Left colon (tissue), 2 donors: ENCODE measurements at regions of chr11 and their contacts with region 1.

Region 1: DNA sequence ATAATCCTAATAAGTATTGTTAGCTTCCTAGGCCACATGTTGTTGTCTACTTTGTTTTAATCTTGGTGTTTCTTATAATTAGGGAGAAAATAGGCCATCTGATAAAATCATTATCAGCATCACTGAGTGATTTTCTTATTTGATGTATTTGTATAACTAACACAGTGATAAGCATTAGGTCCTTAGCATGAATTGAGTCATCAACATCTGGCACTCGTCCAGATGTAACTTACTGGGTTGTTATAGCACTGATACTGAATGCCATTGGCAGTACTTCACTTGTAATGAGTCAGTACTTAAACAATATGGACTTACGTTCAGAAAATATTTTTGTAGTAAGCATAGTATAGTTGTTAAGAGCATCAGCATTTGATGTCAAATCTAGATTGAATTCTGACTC is 16.2 kb downstream of the API5 start:
- DNase-seq: no peak
- ATAC-seq: peak; percentile 65

Region 2: DNA sequence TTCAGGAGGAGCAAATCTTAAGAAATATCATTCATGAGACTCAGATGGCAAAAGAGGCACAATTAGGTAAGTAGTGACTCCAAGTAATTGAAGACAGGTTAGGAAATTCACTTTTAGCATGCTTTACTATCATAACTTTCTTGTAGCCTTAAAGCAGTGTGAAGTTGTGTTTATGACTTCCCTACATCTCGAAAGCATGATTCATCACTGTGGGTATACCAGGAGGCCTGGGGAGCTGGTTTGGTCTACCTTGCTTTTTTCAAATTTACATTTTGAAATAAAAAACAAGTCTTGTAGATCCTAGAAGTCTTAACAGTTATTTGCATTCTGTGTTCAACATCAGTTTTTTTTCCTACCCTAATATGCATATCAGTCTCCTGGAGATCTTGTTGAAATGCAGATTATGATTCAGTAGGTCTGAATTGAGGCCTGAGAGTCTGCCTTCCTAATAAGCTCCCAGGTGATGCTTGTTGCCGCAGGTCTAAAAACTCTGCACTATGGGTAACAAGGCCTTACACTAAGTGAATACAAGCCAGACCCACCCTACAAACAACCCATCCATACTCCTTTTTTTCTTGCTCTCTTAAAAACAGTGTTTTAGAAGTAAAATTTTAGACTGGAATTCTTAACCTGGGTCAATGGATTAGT is 72.1 kb after region 1 on chr11:
- intact Hi-C with region 1: loop called in 1 of 2 experiments (anchors 10 kb)
- DNase-seq: no peak
- ATAC-seq: no peak

Region 3: GRCh38 chr11:43880640-43881159 is 552.7 kb after region 1 on chr11 and contains the start of gene ALKBH3:
- intact Hi-C with region 1: no loop called
- DNase-seq: peak; percentile 88 to 93
- ATAC-seq: peak; percentile 100
- total RNA-seq, gene ALKBH3: 22.7 to 29.9 TPM

Region 4: DNA sequence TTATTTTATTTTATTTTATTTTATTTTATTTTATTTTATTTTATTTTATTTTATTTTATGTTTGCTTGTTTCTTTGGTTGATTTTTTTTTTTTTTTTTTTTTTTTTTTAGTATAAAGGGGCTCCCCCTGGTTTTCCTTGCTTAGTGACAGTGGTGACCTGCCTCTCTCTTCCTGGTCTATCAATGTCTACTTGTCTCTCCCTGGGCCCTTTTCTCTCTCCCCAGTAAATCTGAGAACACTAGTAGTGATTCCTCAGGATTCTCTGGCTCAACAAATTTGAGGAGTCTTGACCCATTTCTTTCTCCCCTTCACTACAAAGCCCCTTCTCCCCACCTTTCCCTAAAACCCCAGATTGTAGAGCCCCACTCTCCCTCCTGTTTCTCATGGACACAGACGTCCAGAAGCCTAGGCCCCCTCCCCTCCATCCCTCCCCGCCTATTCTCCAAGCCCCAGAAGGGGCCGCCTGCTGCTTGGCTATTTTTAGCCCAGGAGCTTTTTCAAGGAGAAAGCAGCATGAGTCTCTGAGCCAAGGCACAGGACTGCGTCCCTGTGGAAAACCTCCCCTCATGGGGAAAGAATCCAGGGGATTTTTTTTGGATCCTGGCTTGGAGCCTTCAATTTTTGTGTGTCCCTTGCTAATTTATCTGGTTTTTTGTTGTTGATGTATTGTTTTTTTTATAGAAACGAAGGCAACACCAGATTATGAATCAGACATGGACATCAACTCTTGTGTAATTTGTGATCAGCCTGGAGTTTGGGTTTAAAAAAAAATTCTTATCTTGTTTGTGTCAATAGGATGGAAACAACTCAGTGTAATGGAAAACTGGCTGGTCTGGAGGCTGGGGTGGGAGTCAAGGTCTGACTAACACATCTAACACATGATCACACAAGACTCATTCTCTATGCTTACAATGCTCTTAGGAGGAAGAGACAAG is 702.3 kb after region 1 on chr11:
- intact Hi-C with region 1: no loop called
- DNase-seq: no peak
- ATAC-seq: no peak